ENCODE measurements at regions of chr22 and their contacts with region 1.

Region 1: DNA sequence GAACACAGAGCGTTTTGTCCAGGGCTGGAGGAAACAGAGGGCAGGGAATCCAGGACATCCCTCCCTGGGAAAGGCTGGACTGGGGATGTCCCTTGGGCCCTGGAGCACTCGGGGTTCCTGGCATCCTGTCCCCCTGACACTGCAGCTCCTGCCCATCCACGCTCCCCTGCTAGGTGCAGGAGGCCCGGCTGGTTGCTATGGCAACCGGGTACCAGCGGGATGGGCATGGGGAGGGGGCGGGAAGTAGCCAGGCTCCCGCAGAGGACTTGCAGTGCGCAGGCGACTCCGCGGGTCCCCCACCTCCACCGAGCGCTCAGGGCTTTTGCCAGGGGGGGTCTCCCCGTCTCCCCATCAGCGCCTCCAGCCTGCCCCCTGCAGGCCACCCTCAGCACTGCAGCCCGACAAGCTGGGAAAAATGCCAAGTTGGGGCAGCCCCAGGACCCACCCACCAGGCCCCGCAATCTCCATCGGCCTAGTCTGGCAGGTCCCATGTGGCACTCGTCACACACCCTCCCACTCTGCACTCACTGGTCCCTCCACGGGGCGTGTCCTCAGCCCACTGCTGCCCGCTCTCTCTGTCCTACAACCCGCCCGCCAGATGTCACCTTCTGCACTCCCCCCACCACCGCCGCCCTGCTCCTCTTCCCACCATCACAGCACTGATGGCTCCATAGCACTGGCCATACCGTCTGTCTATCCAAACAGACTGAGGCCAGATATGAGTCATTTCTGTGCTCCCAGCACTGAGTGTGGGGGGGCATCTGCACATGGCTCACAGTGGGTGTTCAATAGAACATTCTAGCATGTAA is 31.5 kb downstream of the KIAA0930 start:
- DNase-seq: peak; percentile 51
- H3K4me3 Mint-ChIP-seq: no peak overlapping the region
- H3K27ac Mint-ChIP-seq: no peak overlapping the region
- H3K4me1 Mint-ChIP-seq: peaks cover 2% of the 10 kb centered on the region
- H3K27me3 Mint-ChIP-seq: no peaks in the 10 kb centered on the region

Region 2: DNA sequence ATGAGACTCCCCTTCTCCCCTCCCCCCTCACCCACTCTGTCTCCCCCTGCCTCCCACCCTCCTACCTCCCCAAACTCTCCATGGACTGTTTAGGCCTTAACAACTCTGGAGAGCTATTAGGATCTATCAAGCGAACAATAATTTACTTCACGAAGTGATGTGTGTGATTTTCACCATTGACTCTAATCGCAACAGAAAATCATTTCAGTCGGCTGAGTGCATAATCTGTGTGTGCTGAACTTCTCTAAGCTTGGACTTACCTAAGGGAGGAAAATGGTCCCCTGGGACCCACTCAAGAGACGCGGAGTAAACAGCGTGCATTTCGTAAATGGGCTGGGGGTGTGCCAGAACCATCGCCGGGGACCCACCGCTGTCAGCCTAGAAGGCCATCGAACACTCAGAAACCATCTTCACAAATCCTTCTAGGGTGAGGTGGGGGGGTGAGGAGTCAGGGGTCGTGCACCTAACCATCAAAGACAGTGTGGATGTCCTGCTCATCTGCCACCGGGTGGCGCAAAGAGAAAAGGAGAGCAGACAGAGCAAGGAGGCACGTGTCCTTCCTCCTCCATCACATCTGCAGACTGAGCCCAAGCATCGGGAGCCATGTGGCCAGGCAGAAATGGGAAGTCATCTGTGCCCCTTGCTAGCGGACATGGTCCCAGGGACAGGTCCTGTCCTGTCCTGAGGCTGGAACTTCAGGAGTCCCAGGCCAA is 107.5 kb before region 1 on chr22:
- CTCF ChIA-PET with region 1: interaction called, 31 read pairs
- POLR2A ChIA-PET with region 1: no interaction called
- intact Hi-C with region 1: loop called (anchors 1 kb)
- DNase-seq: peak; percentile 67
- H3K4me3 Mint-ChIP-seq: no peak overlapping the region
- H3K27ac Mint-ChIP-seq: no peak overlapping the region
- H3K4me1 Mint-ChIP-seq: peaks cover 5% of the 10 kb centered on the region
- H3K27me3 Mint-ChIP-seq: peaks cover 27% of the 10 kb centered on the region

Measured in activated CD4-positive, alpha-beta memory T cell treated with anti-CD3 and anti-CD28 coated beads for 36 hours (primary cell).